ENCODE measurements at regions of chr16 and their contacts with region 1.

Region 1: DNA sequence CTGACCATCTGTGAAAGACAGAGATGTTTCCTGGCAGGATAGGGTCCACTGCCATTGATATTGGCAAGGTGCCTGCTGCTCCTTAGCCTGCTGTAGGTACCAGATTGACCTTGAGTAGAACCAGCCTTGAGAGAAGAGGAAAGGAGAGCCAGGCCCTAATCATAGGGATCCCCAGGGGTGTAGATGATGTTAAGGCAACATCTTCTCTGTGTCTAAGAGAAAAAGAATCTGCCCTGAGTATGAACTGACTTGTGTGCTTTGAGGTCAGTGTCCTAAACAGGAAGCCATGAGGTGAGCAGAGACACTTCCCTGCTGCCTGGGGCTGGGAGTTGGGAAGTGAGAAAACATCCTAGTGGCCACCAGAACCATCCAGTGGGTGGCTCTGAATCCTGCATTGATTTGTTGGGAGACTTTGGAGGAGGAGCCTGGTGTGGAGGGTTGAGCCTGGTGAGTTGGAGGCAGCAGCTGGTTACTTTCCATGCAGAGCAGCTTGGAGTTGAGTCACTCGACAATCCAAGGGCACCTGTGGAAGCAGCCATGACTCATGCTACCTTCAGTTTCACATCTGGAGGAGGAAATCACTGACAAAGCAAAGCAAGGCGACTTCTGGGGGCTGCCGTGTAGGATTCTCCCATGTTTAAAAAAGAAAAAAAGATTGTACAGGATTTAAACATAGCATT is 47.8 kb downstream of the BMERB1 start:
- DNase-seq: peak; percentile 4
- H3K4me3 ChIP-seq: no peak overlapping the region
- H3K27ac ChIP-seq: no peak overlapping the region
- H3K4me1 ChIP-seq: no peaks in the 10 kb centered on the region
- H3K27me3 ChIP-seq: no peaks in the 10 kb centered on the region
- CTCF ChIP-seq: no peak
- POLR2A ChIP-seq: no peak

Region 2: GRCh38 chr16:15434425-15435215 is 47.6 kb before region 1 on chr16 and contains the start of gene BMERB1:
- intact Hi-C with region 1: no loop called
- DNase-seq: no peak
- H3K4me3 ChIP-seq: peak within 1 kb of the TSS; percentile 49 to 63
- H3K27ac ChIP-seq: peak within 1 kb of the TSS; percentile 59 to 64
- H3K4me1 ChIP-seq: no peaks in the 10 kb centered on the region
- H3K27me3 ChIP-seq: no peaks in the 10 kb centered on the region
- CTCF ChIP-seq: no peak
- POLR2A ChIP-seq: peak; percentile 45
- total RNA-seq, gene BMERB1: 49.1 to 51.1 TPM

Region 3: GRCh38 chr16:15529673-15530072 is 47.5 kb after region 1 on chr16:
- intact Hi-C with region 1: loop called (anchors 5 kb)
- DNase-seq: no peak
- H3K4me3 ChIP-seq: no peak overlapping the region
- H3K27ac ChIP-seq: no peak overlapping the region
- H3K4me1 ChIP-seq: no peaks in the 10 kb centered on the region
- H3K27me3 ChIP-seq: no peaks in the 10 kb centered on the region
- CTCF ChIP-seq: no peak
- POLR2A ChIP-seq: no peak

Region 4: GRCh38 chr16:16014329-16015144 is 532.3 kb after region 1 on chr16:
- intact Hi-C with region 1: no loop called
- DNase-seq: peak; percentile 66
- H3K4me3 ChIP-seq: no peak overlapping the region
- H3K27ac ChIP-seq: peak overlapping the region; percentile 42 to 46
- H3K4me1 ChIP-seq: peaks cover 4% of the 10 kb centered on the region
- H3K27me3 ChIP-seq: no peaks in the 10 kb centered on the region
- CTCF ChIP-seq: no peak
- POLR2A ChIP-seq: no peak